HEK293T (cell line): ENCODE measurements at regions of chr1 and their contacts with region 1.

Region 1: DNA sequence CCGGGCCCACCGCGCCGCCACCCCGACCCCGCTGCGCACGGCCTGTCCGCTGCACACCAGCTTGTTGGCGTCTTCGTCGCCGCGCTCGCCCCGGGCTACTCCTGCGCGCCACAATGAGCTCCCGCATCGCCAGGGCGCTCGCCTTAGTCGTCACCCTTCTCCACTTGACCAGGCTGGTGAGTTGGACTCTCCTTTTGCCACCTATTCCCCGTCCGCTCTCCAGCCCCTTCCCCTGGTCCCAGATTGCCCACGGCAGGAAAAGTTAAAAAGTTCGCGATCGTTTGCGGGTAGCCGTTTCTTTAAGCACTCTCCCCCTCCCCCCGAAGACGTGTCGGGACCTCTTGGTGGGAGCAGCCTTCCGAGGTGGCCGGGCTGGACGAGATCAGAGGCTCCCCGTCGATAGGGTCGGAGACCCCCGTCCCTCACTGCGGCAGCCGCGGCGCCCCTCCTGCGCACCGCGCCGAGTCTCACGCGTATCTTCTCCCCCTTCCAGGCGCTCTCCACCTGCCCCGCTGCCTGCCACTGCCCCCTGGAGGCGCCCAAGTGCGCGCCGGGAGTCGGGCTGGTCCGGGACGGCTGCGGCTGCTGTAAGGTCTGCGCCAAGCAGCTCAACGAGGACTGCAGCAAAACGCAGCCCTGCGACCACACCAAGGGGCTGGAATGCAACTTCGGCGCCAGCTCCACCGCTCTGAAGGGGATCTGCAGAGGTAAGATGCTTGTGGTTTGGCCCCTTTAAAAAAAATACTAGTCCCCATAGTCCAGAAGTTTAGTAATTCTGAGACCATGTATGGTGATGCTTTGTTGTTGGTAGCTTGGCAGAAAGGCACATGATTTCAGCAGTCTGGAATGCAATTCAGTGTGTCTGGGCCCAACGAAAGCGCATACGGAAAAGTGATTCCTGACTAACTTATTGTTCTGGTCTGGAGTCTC is 576 bp downstream of the CCN1 start:
- DNase-seq: peak; percentile 87

Region 2: DNA sequence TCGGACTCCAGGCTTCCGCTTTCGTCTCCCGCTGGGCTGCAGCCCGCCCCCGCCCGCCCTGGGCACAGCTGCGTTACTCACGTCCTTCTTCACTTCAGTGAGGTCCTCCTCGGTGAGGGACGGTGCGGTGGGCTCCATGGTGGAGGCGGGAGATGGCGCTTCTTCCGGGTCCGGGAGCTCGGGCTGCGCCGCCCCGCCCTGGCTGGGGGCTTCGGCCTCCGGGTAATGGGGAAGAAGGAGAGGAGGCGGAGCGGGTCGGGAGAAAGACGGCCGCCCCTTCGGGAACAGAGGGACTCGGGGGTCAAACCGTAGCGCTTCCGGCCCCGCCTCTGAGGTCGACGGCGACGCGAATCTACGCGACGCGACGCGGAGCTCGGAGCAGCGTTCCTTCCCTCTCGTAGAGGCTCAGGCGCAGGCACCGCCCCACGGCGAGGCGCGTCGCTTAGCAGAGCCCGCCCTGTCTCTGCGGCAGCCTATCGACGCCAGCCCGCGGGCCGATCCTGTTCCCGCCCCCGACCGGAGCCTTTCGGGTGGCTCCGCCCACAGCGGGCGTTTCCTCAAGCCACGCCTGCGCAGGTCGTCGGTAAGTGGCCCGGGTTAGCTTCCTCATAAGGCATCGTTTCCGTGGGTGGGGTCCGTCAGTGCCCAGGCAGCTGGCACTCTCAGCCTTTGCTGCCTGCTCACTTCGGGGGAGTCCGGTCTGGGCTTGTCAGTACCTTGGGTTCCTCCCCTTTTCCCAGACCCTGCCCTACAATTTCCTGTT is 304.7 kb before region 1 on chr1 and contains the start of gene BCL10:
- CTCF ChIA-PET with region 1: interaction called, 5 read pairs
- POLR2A ChIA-PET with region 1: interaction called, 15 read pairs
- DNase-seq: peak; percentile 99

Region 3: GRCh38 chr1:85464497-85465098 is 116.5 kb before region 1 on chr1:
- CTCF ChIA-PET with region 1: interaction called, 6 read pairs
- POLR2A ChIA-PET with region 1: interaction called, 18 read pairs
- DNase-seq: peak; percentile 67

Region 4: GRCh38 chr1:85488126-85488525 is 93.0 kb before region 1 on chr1:
- CTCF ChIA-PET with region 1: no interaction called
- POLR2A ChIA-PET with region 1: no interaction called
- DNase-seq: no peak

Region 5: DNA sequence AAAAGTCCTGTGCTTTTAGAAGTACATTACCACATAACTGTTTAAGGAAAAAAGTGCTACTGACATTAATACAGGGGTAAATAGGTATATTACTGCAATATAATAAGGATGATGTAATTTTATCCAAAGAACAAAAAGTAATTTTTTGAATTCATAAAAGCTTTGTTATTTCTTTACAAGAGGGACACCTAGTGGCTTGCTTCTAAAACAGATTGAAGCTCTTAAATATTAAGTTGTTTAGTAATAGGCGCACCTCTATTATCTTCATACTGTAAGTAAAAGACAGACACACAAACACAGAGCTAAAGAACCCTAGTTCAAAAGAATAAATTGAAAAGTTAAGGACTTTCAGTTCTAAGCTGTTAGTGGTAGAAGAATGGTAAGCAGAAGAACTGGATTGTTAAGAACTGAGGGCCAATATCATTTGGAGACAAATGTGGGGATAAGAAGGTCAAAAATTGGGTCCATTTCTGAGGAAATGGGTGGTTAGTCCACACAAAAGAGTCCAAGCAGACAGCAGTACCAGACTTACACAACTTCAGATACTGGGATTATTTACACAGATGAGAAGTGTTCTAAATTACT is 111.7 kb after region 1 on chr1:
- CTCF ChIA-PET with region 1: interaction called, 6 read pairs
- POLR2A ChIA-PET with region 1: interaction called, 11 read pairs
- DNase-seq: no peak

Region 6: GRCh38 chr1:85707990-85708828 is 127.1 kb after region 1 on chr1 and contains the start of gene ZNHIT6:
- CTCF ChIA-PET with region 1: interaction called, 5 read pairs
- POLR2A ChIA-PET with region 1: interaction called, 17 read pairs
- DNase-seq: peak; percentile 91